ENCODE measurements at regions of chr12 and their contacts with region 1.

Region 1: GRCh38 chr12:6688999-6689882 is at the start of gene ZNF384:
- DNase-seq: peak; percentile 88
- ATAC-seq: peak; percentile 81
- H3K4me3 Mint-ChIP-seq: peak within 1 kb of the TSS; percentile 90
- H3K27ac Mint-ChIP-seq: peak within 1 kb of the TSS; percentile 95
- H3K4me1 Mint-ChIP-seq: peaks cover 37% of the 10 kb centered on the region
- H3K27me3 Mint-ChIP-seq: no peaks in the 10 kb centered on the region
- total RNA-seq, gene ZNF384: 79.5 to 88.2 TPM

Region 2: GRCh38 chr12:6493497-6494257 is 195.6 kb before region 1 on chr12 and contains the start of gene NCAPD2:
- POLR2A ChIA-PET with region 1: interaction called, 12 read pairs
- DNase-seq: peak; percentile 94
- ATAC-seq: peak; percentile 87
- H3K4me3 Mint-ChIP-seq: peak within 1 kb of the TSS; percentile 97
- H3K27ac Mint-ChIP-seq: peak within 1 kb of the TSS; percentile 97
- H3K4me1 Mint-ChIP-seq: peaks cover 28% of the 10 kb centered on the region
- H3K27me3 Mint-ChIP-seq: no peaks in the 10 kb centered on the region
- total RNA-seq, gene NCAPD2: 147 to 157 TPM

Region 3: DNA sequence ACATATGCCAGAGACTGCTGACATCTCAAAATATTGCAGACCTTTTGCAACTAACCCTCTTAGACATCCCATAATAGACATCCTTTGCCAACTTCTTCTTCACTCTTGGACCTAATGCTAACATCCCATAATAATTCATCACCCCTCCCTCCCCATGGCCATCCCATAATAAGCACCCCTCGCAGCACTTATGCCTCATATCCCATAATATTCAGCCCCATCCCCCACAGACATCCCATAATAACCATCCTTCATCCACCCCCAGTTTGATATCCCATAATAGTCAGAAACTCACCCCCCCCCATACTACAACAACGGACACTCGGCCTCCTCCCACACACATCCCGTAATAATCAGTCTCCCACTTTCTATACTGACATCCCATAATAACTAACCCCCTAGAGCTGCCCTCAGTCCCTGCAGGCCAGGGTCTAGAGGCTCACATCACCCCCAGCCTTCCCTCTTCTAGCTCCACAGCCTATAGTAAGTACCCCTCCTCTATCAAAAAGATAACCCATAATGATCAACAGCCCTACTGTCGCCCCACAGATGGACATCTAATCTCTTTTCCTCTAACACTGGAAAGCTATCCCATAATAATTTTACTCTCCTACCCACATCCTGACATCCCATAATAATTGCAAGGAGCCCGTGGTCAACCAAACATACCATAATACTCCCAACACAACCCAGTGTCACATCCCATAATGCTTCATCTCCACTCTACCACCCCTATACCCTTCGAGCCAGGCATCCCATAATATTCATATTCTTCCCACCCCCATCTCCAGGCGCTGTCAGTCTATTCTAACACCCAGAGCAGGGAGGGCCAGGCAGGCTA is 81.3 kb before region 1 on chr12:
- POLR2A ChIA-PET with region 1: interaction called, 27 read pairs
- DNase-seq: peak; percentile 54
- ATAC-seq: peak; percentile 63
- H3K4me3 Mint-ChIP-seq: no peak overlapping the region
- H3K27ac Mint-ChIP-seq: no peak overlapping the region
- H3K4me1 Mint-ChIP-seq: peaks cover 48% of the 10 kb centered on the region
- H3K27me3 Mint-ChIP-seq: no peaks in the 10 kb centered on the region

Region 4: DNA sequence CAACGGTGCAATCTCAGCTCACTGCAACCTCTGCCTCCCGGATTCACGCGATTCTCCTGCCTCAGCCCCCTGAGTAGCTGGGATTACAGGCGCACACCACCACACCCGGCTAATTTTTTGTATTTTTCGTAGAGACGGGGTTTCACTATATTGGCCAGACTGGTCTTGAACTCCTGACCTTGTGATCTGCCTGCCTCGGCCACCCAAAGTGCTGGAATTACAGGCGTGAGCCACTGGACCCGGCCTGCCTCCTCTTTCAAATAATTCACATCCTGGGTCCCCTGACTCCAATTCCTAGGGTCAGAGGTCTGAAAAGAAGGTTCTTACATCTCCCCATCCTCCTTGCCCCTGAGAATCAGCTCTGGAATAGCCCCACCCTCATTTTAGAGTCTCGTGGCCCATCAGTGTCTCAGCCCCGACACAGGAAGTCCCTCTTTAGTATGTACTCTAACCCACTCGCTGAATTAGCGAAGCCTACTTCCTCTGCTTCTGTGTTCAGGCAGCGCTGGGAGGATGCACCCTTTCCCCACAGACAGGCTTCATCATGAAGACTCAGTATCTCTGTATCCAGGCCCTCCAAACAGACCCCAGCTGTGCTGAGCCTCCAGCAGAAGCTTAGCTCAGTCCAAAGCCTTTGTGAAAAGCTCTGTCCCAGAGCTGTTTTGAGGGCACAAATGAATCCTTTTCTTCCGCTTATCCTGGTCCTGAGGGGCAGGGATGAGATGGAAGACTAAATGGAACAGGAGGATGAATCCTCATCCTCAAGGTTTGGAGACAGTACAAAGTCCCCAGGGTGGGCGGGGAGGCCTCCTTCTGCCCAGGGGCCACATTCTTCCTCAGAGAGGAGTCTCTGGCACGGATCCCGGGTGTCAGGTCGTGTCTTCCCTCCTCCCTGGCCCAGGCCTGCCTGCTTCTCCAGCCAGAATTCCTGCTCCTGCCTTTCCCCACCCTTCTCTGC is 56.9 kb before region 1 on chr12:
- POLR2A ChIA-PET with region 1: interaction called, 24 read pairs
- DNase-seq: peak; percentile 54
- ATAC-seq: peak; percentile 79
- H3K4me3 Mint-ChIP-seq: peak overlapping the region; percentile 89
- H3K27ac Mint-ChIP-seq: peak overlapping the region; percentile 99
- H3K4me1 Mint-ChIP-seq: peaks cover 57% of the 10 kb centered on the region
- H3K27me3 Mint-ChIP-seq: no peaks in the 10 kb centered on the region

Region 5: DNA sequence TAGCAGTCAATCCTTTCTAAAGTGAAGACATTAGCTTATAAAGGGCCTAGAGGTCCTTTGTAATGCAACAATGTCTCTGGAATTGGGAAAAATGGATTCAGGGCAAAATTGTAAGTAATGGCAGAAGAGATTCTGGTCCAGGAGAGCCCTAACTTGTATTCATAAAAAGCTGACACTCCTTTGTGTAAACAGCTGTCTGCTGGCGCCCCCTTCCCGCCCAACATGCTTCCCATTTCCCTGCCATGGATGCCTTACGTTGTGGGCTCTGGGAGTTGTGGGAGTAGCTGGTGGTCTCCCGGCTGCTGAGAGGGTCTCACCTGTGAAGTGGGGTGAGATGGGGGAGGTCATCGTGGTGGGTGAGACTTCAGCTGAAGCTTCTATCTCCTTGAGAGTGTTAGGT is 44.3 kb before region 1 on chr12:
- POLR2A ChIA-PET with region 1: no interaction called
- DNase-seq: no peak
- ATAC-seq: no peak
- H3K4me3 Mint-ChIP-seq: no peak overlapping the region
- H3K27ac Mint-ChIP-seq: no peak overlapping the region
- H3K4me1 Mint-ChIP-seq: peaks cover 17% of the 10 kb centered on the region
- H3K27me3 Mint-ChIP-seq: peaks cover 3% of the 10 kb centered on the region

Region 6: GRCh38 chr12:6699989-6700645 is 10.9 kb after region 1 on chr12:
- POLR2A ChIA-PET with region 1: interaction called, 14 read pairs
- DNase-seq: peak; percentile 48
- ATAC-seq: peak; percentile 27
- H3K4me3 Mint-ChIP-seq: peak overlapping the region; percentile 67
- H3K27ac Mint-ChIP-seq: no peak overlapping the region
- H3K4me1 Mint-ChIP-seq: peaks cover 25% of the 10 kb centered on the region
- H3K27me3 Mint-ChIP-seq: peaks cover 71% of the 10 kb centered on the region

Region 7: DNA sequence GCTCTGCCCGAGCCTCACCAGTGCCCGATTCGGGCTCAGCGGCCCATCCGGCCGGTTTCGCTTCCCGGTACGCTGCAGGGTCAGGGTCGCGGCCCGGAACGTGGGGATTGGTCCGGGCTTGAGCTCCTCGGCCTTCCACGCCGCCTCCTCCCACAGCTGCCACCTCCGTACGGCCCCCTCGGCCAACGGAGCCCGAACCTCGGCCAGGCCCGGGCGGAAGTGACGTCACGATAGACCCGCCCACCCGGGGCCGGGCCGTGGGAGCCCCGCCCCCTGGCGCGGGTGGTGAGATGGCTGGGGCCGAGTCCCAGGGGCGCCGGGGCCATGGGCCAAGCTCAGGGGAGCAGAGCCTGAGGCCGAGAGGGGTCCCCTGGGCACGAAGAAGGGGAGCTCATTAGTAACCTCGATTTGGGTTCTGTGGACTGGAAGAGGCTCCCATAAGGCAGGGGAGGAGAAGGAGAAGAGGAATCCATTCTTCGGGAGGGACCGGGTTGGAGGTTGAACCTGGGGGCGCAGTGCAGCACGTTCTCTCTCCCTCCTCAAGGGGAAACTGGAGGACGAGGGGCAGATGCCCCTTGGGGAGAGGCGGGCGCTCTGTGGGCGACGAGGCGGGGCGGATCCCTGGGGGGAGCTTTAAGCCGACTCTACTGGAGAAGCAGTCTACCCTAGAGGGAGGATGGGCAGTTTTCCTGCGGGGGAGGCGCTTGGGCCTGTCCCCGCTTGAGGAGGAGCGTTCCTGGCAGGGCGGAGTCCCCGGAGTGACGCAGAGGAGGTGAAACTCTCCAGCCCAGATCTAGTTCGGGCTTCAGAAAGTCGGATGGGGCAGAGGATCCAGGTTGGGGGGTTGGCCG is 63.9 kb after region 1 on chr12 and contains the start of gene MLF2:
- POLR2A ChIA-PET with region 1: interaction called, 21 read pairs
- DNase-seq: peak; percentile 99
- ATAC-seq: peak; percentile 96
- H3K4me3 Mint-ChIP-seq: peak within 1 kb of the TSS; percentile 95
- H3K27ac Mint-ChIP-seq: peak within 1 kb of the TSS; percentile 98
- H3K4me1 Mint-ChIP-seq: peaks cover 26% of the 10 kb centered on the region
- H3K27me3 Mint-ChIP-seq: peaks cover 9% of the 10 kb centered on the region
- total RNA-seq, gene MLF2: 108 to 118 TPM

Region 8: GRCh38 chr12:6828781-6829535 is 139.7 kb after region 1 on chr12:
- POLR2A ChIA-PET with region 1: no interaction called
- DNase-seq: peak; percentile 64
- ATAC-seq: peak; percentile 50
- H3K4me3 Mint-ChIP-seq: peak overlapping the region; percentile 82
- H3K27ac Mint-ChIP-seq: peak overlapping the region; percentile 70
- H3K4me1 Mint-ChIP-seq: peaks cover 15% of the 10 kb centered on the region
- H3K27me3 Mint-ChIP-seq: peaks cover 61% of the 10 kb centered on the region

Measured in activated naive CD8-positive, alpha-beta T cell treated with anti-CD3 and anti-CD28 coated beads, Interleukin-2, amount 10 ng/mL, durations not matched to agents 7 days and 5 days (primary cell).